Activated T-helper 2 cell treated with anti-CD3 and anti-CD28 coated beads, Interferon-gamma antibody, Interleukin-2, Interleukin-4, amounts not matched to agents 10 μg/mL and 5 μg/mL and 100 μg/mL, durations not matched to agents 14 hours and 24 hours and 36 hours (primary cell): ENCODE measurements at regions of chr10 and their contacts with region 1.

Region 1: DNA sequence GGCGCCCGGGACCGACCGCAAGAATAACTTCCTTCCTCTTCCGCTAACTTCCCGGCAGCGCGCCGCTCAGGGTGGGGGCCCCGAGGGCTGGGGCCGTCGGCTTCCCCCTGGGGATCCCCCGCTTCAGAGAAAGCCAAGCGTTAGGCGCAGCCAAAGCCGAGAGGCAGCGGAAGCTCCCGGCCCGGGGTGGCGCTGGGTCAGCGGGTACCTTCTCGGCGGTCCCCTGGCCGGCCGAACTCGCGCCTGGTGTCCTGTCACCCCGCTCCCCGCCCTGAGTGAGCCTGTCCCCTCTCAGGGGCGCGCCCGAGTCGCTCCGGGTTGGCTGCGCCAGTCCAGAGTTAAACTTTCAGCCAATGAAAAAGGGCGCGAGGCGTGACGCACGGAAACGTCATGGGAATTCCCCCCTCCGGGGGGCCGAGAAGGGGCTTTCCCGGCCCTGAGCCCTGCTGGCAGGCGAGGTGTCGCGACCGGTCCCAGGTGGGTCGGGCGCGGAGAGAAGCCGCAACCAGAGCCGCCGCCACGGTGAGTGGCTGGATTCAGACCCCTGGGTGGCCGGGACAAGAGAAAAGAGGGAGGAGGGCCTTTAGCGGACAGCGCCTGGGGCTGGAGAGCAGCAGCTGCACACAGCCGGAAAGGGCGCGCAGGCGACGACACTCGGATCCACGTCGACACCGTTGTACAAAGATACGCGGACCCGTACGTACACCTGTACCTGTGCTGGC is 1.3 kb upstream of the NFKB2 start:
- DNase-seq: peak; percentile 99
- H3K4me3 Mint-ChIP-seq: peak overlapping the region; percentile 91
- H3K27ac Mint-ChIP-seq: peak overlapping the region; percentile 99
- H3K4me1 Mint-ChIP-seq: peaks cover 35% of the 10 kb centered on the region
- H3K27me3 Mint-ChIP-seq: no peaks in the 10 kb centered on the region

Region 2: GRCh38 chr10:100485366-100485765 is 1908.9 kb before region 1 on chr10:
- intact Hi-C with region 1: no loop called
- DNase-seq: no peak
- H3K4me3 Mint-ChIP-seq: no peak overlapping the region
- H3K27ac Mint-ChIP-seq: no peak overlapping the region
- H3K4me1 Mint-ChIP-seq: peaks cover 28% of the 10 kb centered on the region
- H3K27me3 Mint-ChIP-seq: peaks cover 4% of the 10 kb centered on the region

Region 3: GRCh38 chr10:102114861-102115618 is 279.2 kb before region 1 on chr10:
- intact Hi-C with region 1: loop called (anchors 5 kb)
- DNase-seq: peak; percentile 74
- H3K4me3 Mint-ChIP-seq: peak overlapping the region; percentile 84
- H3K27ac Mint-ChIP-seq: peak overlapping the region; percentile 92
- H3K4me1 Mint-ChIP-seq: peaks cover 59% of the 10 kb centered on the region
- H3K27me3 Mint-ChIP-seq: no peaks in the 10 kb centered on the region

Region 4: DNA sequence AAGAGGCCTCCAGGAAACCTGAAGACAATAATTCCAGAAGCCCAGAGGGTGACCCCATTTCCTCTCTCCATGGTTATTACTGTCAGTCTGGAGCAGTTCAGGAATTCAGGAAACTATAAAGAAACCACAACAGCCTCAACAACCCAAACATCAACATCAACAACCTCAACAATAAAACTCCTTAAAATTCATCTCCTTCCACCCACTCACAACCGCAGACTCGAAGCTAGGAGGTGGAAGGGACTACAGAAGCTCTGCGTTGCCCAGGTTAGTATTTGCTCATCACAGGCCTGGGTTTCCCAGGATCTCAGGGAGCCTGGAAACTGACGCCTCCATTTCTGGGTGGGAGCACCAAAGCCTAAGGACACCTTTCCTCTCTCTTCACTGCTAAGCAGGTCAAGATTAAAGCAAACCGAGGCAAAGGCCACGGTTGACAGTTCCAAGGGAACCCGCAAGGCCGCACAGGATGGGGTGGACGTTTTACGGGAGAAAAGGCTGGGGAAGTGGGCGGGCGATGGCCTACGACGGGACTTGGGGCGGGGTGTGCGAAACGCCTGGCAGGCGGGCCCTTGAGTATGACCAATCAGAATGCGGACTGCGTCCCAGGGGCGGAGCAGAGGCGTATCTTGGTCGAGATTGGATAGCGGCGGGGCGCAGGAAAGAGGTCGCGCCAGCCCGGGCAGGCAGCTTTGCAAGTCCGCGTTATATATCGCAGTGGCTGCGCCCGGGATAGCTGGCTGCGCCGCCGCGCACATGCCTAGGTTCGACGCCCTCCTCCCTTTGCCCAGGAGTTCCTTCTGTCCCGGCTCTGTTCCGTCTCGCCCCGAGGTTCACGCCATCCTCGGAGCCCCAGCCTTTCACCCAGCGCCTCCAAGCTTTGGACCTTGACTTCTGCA is 168.3 kb before region 1 on chr10 and contains the start of gene ELOVL3:
- intact Hi-C with region 1: loop called (anchors 1 kb)
- DNase-seq: peak; percentile 86
- H3K4me3 Mint-ChIP-seq: peak within 1 kb of the TSS; percentile 59
- H3K27ac Mint-ChIP-seq: no peak within 1 kb of the TSS
- H3K4me1 Mint-ChIP-seq: peaks cover 23% of the 10 kb centered on the region
- H3K27me3 Mint-ChIP-seq: peaks cover 47% of the 10 kb centered on the region
- total RNA-seq, gene ELOVL3: not detected in 2 replicates

Region 5: DNA sequence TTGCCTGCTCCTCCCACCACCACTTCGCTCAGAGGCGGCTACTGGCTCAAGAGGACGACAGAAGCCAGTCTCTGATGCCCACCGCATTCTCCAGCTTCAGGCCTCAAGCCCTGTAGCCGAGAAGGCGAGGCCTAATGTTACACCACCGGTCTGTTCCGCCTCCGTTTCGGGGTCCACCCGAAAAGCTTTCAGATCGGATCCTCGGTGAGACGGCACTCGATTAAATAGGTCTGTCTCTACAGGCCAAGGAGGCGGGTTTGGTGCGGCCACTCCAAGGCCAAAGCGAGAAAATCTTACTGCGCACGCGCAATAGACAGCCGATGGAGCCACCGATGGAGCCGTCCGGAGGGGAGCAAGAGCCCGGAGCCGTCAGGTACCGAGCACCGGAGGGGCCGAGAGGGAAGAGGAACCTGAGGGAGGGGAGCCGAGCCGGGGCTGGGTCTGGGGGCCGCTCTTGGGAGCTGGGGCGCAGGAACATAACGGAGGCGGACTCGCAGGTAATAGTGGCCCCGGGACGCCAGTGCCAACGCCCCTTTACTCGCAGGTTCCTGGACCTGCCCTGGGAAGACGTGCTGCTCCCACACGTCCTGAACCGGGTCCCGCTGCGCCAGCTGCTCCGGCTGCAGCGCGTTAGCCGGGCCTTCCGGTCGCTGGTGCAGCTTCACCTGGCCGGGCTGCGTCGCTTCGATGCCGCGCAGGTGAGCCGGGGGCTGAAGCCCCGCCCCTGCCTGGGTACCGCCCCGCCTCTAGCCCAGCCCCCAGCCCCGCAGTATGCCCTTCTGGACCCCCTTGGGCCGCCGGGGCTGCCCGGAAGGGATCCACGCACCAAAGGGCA is 26.8 kb after region 1 on chr10 and contains the start of gene FBXL15:
- intact Hi-C with region 1: loop called (anchors 1 kb)
- DNase-seq: peak; percentile 95
- H3K4me3 Mint-ChIP-seq: peak within 1 kb of the TSS; percentile 93
- H3K27ac Mint-ChIP-seq: peak within 1 kb of the TSS; percentile 87
- H3K4me1 Mint-ChIP-seq: peaks cover 17% of the 10 kb centered on the region
- H3K27me3 Mint-ChIP-seq: peaks cover 18% of the 10 kb centered on the region
- total RNA-seq, gene FBXL15: 14.8 and 15.1 TPM in 2 replicates

Region 6: GRCh38 chr10:102450194-102450938 is 56.1 kb after region 1 on chr10:
- intact Hi-C with region 1: loop called (anchors 1 kb)
- DNase-seq: peak; percentile 88
- H3K4me3 Mint-ChIP-seq: peak overlapping the region; percentile 94
- H3K27ac Mint-ChIP-seq: peak overlapping the region; percentile 87
- H3K4me1 Mint-ChIP-seq: peaks cover 23% of the 10 kb centered on the region
- H3K27me3 Mint-ChIP-seq: no peaks in the 10 kb centered on the region

Region 7: DNA sequence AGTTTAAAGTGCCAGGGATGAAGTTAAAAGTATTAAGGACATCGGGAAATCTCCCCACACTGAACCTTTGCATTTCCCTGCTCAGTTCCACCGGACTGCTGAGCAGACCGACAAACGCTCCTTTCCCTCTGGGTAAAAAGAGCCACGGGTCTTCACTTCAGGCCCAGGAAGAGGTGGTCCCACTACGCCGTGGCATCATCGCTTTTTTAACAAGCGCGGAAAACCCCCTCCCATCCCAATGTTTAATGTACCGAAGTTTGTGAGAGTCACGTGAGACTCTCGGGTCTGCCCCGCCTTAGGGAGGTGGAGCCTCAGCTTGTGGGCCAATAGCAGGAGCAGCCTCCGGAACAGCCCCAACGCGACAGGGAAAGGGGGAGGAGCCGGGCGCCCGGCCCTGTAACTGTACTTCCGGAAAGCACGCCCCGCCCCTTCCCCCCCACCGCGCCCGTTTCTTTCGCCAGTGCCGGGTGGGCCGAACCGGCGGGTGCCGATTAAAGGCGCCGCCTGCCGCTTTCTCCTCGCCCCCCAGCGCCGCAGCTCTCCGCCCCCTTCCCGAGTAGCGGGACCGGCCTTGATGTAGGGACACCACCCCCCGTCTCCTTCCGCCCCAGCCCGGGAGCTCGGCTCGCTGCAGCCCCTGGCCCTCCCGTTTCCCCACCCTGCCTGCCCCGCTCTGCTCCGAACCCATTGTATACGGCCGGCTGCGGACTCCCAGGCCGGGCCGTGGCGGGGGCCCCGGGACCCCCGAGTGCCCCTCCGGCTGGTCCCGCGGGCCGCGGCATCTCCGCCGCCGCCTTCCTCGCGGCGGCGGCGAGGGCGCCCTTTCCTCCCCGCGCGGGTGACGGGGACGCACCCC is 247.9 kb after region 1 on chr10:
- intact Hi-C with region 1: loop called (anchors 2 kb)
- DNase-seq: peak; percentile 94
- H3K4me3 Mint-ChIP-seq: peak overlapping the region; percentile 85
- H3K27ac Mint-ChIP-seq: peak overlapping the region; percentile 88
- H3K4me1 Mint-ChIP-seq: peaks cover 18% of the 10 kb centered on the region
- H3K27me3 Mint-ChIP-seq: no peaks in the 10 kb centered on the region